ENCODE measurements at regions of chr1 and their contacts with region 1.

Region 1: GRCh38 chr1:169106095-169106920 is at the start of gene ATP1B1:
- DNase-seq: peak; percentile 89 to 96 (median 95)
- ATAC-seq: peak; percentile 88 to 92
- H3K4me3 ChIP-seq: peak within 1 kb of the TSS; percentile 90
- H3K27ac ChIP-seq: peak within 1 kb of the TSS; percentile 87
- H3K4me1 ChIP-seq: peaks cover 9% of the 10 kb centered on the region
- H3K27me3 ChIP-seq: no peaks in the 10 kb centered on the region
- total RNA-seq, gene ATP1B1: 222 to 294 (median 268) TPM

Region 2: GRCh38 chr1:168734946-168735345 is 371.4 kb before region 1 on chr1:
- intact Hi-C with region 1: loop called in 1 of 4 experiments (anchors 10 kb)
- DNase-seq: no peak
- ATAC-seq: peak; percentile 53
- H3K4me3 ChIP-seq: no peak overlapping the region
- H3K27ac ChIP-seq: no peak overlapping the region
- H3K4me1 ChIP-seq: peaks cover 2% of the 10 kb centered on the region
- H3K27me3 ChIP-seq: no peaks in the 10 kb centered on the region

Region 3: GRCh38 chr1:168879916-168880734 is 226.2 kb before region 1 on chr1:
- intact Hi-C with region 1: loop called in 1 of 4 experiments (anchors 10 kb)
- DNase-seq: peak; percentile 35 to 69 (median 68)
- ATAC-seq: peak; percentile 86 to 95
- H3K4me3 ChIP-seq: no peak overlapping the region
- H3K27ac ChIP-seq: no peak overlapping the region
- H3K4me1 ChIP-seq: peaks cover 4% of the 10 kb centered on the region
- H3K27me3 ChIP-seq: no peaks in the 10 kb centered on the region